ENCODE measurements at regions of chr7 and their contacts with region 1.

Region 1: DNA sequence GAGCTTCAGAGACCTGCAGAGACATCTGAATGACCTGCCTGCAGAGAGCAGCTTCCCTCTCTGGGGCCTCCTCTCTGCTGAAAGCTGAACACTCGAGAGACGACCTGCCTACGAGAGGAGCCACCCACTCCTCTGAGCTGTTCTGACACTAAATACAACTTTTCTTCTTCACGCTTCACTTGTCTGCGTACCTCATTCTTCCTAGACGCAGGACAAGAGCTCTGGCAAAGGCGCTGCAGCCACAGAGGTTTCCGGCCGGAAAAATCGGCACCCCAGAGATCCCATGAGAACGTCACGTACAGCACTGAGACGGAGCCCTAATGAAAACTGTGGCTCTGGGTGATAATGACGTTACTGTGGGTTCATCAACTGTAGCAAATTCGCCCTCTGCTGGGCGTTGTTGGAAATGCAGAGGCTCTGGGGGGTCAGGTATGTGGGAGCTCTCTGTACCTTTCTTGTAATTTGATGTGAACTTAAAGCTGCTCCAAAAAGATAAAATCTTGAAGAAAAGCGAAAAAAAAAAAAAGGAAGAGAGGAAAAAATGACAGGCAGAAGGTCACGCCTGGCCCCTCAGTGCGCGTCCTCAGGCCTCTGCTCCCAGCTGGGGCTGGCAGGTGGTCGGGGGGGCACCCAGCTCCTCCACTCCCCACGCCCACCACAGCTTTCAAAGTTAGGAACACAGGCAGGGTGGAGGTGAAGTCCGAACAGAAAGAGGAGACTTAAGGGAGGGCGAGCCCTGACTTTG is 120.7 kb downstream of the DYNC2I1 start:
- DNase-seq: peak; percentile 73
- ATAC-seq: peak; percentile 67
- H3K4me3 ChIP-seq: peak overlapping the region; percentile 15 to 39
- H3K27ac ChIP-seq: no peak overlapping the region
- H3K4me1 ChIP-seq: peaks cover 5 to 32% of the 10 kb centered on the region in 2 experiments
- H3K27me3 ChIP-seq: no peaks in the 10 kb centered on the region
- CTCF ChIP-seq: peak; percentile 81 to 93 (median 91)
- POLR2A ChIP-seq: no peak
- RAD21 ChIP-seq: peak; percentile 95

Region 2: GRCh38 chr7:158442253-158442652 is 534.8 kb before region 1 on chr7:
- CTCF ChIA-PET with region 1: no interaction called
- POLR2A ChIA-PET with region 1: no interaction called
- RAD21 ChIA-PET with region 1: no interaction called
- intact Hi-C with region 1: loop called (anchors 2 kb)
- DNase-seq: peak; percentile 22
- ATAC-seq: peak; percentile 77
- H3K4me3 ChIP-seq: no peak overlapping the region
- H3K27ac ChIP-seq: no peak overlapping the region
- H3K4me1 ChIP-seq: no peaks in the 10 kb centered on the region
- H3K27me3 ChIP-seq: no peaks in the 10 kb centered on the region; the same call in 1 of the 2 replicates
- CTCF ChIP-seq: peak; percentile 24 to 68 (median 65); a peak in 5 of 6 replicates
- POLR2A ChIP-seq: no peak
- RAD21 ChIP-seq: peak; percentile 56

Region 3: DNA sequence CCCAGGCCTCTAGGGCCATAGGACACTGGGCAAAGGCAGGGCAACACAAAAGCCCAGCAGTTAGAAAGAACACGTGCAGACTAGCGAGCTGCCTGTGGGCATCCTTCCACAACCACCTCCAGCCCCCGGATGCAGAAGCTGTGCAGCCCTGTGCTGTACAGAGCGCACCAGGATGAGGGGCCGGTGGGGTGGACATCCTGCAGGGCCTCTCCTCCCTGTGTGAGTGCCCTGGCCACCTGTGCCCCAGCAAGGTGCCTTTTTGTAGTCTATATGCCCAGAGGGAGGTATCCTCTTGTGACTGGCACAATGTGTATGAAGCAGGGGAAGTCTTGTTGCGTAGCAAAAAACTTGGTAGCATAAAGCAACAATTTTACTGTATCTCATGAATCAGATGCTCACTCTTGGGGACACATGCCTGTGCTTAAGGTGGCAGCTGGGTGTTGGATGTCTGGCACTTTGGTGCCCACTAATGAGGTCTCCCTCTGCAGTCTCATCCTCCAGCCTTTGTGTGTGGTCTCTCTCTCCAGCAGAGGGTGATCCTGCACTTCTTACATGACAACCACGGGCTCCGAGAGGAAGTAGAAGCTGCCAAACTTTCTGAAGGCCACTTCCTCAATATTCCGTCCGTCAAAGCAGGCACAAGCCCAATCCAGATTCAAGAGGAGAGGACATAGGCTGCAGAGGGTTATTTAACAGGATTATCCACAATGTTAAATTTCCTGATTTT is 281.1 kb before region 1 on chr7:
- CTCF ChIA-PET with region 1: interaction called, 12 read pairs
- POLR2A ChIA-PET with region 1: no interaction called
- RAD21 ChIA-PET with region 1: no interaction called
- intact Hi-C with region 1: loop called (anchors 1 kb)
- DNase-seq: peak; percentile 34
- ATAC-seq: peak; percentile 79
- H3K4me3 ChIP-seq: no peak overlapping the region
- H3K27ac ChIP-seq: no peak overlapping the region
- H3K4me1 ChIP-seq: no peaks in the 10 kb centered on the region
- H3K27me3 ChIP-seq: no peaks in the 10 kb centered on the region
- CTCF ChIP-seq: peak; percentile 43 to 47 (median 46); a peak in 4 of 6 replicates
- POLR2A ChIP-seq: no peak
- RAD21 ChIP-seq: peak; percentile 73

Region 4: GRCh38 chr7:158760936-158761335 is 216.1 kb before region 1 on chr7:
- CTCF ChIA-PET with region 1: no interaction called
- POLR2A ChIA-PET with region 1: no interaction called
- RAD21 ChIA-PET with region 1: no interaction called
- intact Hi-C with region 1: loop called (anchors 1 kb)
- DNase-seq: no peak
- ATAC-seq: peak; percentile 88
- H3K4me3 ChIP-seq: no peak overlapping the region
- H3K27ac ChIP-seq: no peak overlapping the region
- H3K4me1 ChIP-seq: no peaks in the 10 kb centered on the region
- H3K27me3 ChIP-seq: no peaks in the 10 kb centered on the region
- CTCF ChIP-seq: peak; percentile 20 to 49 (median 48); a peak in 5 of 6 replicates
- POLR2A ChIP-seq: no peak
- RAD21 ChIP-seq: peak; percentile 53; the same call in 1 of the 2 replicates

Region 5: DNA sequence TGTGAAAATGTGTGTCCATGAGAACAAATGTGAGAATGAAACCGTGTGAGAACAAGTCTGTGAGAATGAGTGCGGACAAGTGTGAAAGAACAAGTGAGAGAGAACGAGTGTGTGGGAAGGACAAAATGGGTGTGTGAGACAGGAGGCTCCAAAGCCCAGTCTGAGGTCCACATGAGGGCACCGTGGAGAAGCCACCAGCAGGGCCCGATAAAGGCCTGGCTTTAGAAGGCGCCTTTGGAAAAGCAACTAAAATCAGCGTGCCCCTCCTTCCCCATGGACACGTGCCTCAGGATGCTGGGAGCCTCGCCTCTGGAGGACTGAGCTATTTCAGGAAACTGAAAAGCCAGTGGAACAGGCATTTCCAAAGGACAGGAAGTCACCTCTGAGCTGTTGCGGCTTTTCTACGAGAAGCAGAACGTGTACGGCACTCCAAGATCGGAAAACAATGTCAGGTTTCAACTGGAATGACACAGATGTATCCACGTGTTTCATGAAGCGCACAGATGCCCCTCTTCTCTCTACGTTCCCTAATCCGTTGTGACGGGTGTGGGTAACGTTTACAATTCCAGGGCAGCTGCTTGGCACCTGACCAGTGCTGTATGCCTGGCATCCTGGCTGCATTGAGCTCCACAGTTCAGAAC is 194.1 kb before region 1 on chr7:
- CTCF ChIA-PET with region 1: interaction called, 4 read pairs
- POLR2A ChIA-PET with region 1: no interaction called
- RAD21 ChIA-PET with region 1: no interaction called
- intact Hi-C with region 1: loop called (anchors 1 kb)
- DNase-seq: no peak
- ATAC-seq: peak; percentile 75
- H3K4me3 ChIP-seq: no peak overlapping the region
- H3K27ac ChIP-seq: peak overlapping the region; percentile 21; the same call in 1 of the 2 replicates
- H3K4me1 ChIP-seq: peaks cover 7 to 28% of the 10 kb centered on the region in 2 experiments
- H3K27me3 ChIP-seq: no peaks in the 10 kb centered on the region
- CTCF ChIP-seq: peak; percentile 34 to 63 (median 42); a peak in 5 of 6 replicates
- POLR2A ChIP-seq: no peak
- RAD21 ChIP-seq: peak; percentile 69

Region 6: DNA sequence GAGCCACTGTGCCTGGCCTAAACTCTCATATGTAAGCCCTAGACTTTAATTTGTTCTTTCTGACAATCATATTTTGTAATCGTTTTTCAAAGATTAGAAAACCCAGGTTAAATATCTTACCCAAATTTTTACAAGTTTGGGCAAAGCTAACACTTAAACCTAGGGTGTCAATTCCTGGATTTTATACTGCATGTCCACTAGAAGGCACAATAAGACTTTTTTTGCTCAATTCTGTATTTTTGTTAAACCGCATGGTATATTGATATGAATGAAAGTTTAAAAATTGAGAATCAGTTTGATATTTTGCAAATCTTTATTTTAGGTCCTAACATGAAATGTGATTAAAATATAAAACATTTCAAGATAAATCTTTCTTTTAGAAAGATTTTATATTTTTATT is 91.4 kb before region 1 on chr7:
- CTCF ChIA-PET with region 1: interaction called, 13 read pairs
- POLR2A ChIA-PET with region 1: no interaction called
- RAD21 ChIA-PET with region 1: no interaction called
- intact Hi-C with region 1: loop called (anchors 1 kb)
- DNase-seq: no peak
- ATAC-seq: peak; percentile 49; the same call in 1 of the 2 replicates
- H3K4me3 ChIP-seq: no peak overlapping the region
- H3K27ac ChIP-seq: no peak overlapping the region
- H3K4me1 ChIP-seq: no peaks in the 10 kb centered on the region
- H3K27me3 ChIP-seq: no peaks in the 10 kb centered on the region
- CTCF ChIP-seq: peak; percentile 37 to 56 (median 41); a peak in 5 of 6 replicates
- POLR2A ChIP-seq: no peak
- RAD21 ChIP-seq: peak; percentile 62

Region 7: DNA sequence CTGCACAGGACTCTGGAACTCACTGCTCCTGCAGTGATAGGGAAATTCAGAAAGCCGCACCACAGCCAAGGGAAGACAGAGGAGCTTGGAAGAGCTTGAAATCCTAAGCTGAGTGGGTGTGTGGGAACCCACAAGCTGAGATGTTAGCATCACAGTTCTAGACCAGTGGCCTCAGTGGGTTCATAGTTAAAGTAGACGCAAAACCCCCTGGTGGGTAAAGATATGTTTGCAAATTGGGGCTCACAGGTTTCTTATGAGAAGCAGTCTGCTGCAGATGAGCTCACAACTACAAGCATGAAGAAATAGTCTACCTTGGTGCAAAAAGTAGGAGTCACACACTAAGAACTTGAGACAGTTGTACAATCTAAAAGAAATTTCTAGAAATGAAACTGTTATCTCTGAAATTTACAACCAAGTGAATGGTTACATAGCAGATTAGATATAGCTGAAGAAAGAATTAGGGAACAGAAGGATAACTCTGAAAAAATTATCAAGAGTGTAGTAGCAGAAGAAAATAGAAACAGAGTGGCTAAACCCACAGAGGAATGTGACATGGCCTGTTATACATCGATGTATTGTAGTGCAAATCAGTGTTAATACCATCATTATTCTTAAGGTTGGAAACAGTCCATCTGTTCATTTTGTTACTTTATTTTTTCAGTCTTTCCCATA is 43.4 kb before region 1 on chr7:
- CTCF ChIA-PET with region 1: no interaction called
- POLR2A ChIA-PET with region 1: no interaction called
- RAD21 ChIA-PET with region 1: no interaction called
- intact Hi-C with region 1: no loop called
- DNase-seq: no peak
- ATAC-seq: peak; percentile 63
- H3K4me3 ChIP-seq: no peak overlapping the region
- H3K27ac ChIP-seq: no peak overlapping the region
- H3K4me1 ChIP-seq: no peaks in the 10 kb centered on the region
- H3K27me3 ChIP-seq: no peaks in the 10 kb centered on the region
- CTCF ChIP-seq: peak in 2 of 3 experiments; percentile 22 to 34; a peak in 3 of 6 replicates
- POLR2A ChIP-seq: no peak
- RAD21 ChIP-seq: 0 out of 2 replicates have a peak, but pooled peaks have one; percentile 10

Region 8: DNA sequence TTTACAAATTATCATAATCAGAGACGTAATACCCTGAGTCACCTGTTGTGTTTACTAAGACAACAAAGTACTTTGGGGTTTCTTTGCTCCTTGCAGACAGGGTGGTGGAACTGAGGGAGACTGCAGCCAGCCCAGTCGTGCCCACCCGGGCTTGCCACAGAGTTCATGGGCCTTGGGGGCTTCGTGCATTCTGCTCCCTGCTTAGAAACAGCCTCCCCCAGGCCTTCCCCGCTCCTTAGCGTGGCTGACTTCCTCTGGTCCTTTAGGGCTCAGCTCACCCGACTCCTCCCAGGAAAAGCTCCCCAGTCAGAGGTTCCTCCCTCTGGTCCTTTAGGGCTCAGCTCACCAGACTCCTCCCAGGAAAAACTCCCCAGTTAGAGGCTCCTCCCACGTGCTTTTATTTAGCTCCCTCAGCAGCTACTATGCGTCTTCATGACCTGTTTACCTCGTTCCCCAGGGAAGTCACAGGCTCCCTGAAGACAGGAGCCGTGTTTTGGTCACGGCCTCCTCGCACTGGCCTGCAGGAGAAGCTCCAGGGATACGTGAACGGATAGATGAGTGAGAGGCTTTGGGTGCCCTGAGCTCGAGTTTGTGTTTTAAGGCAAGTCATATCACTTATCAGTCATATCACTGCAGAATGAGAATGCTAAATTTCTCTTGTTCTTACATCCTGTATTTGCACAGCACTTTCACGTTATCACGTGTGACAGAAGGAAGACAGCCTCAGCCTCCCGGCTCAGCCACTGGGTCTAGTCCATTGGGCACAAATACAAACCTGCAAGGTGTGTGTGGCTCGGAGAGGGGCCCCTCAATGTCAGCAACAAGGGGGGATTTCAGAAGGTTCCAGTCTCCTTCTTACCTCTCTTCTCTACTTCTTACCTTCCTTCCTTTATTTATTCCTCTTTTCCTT is 220.3 kb after region 1 on chr7:
- CTCF ChIA-PET with region 1: no interaction called
- POLR2A ChIA-PET with region 1: no interaction called
- RAD21 ChIA-PET with region 1: no interaction called
- intact Hi-C with region 1: loop called (anchors 5 kb)
- DNase-seq: no peak
- ATAC-seq: peak; percentile 93
- H3K4me3 ChIP-seq: no peak overlapping the region
- H3K27ac ChIP-seq: no peak overlapping the region
- H3K4me1 ChIP-seq: peaks cover 0 to 2% of the 10 kb centered on the region in 2 experiments; a peak in 1 of 4 replicates
- H3K27me3 ChIP-seq: 0 out of 2 replicates have a peak, but pooled peaks cover 4% of the 10 kb centered on the region
- CTCF ChIP-seq: no peak
- POLR2A ChIP-seq: no peak
- RAD21 ChIP-seq: no peak

Measured in HCT116 (cell line).